Ascending aorta (tissue), 2 donors: ENCODE measurements at regions of chr7 and their contacts with region 1.

Region 1: DNA sequence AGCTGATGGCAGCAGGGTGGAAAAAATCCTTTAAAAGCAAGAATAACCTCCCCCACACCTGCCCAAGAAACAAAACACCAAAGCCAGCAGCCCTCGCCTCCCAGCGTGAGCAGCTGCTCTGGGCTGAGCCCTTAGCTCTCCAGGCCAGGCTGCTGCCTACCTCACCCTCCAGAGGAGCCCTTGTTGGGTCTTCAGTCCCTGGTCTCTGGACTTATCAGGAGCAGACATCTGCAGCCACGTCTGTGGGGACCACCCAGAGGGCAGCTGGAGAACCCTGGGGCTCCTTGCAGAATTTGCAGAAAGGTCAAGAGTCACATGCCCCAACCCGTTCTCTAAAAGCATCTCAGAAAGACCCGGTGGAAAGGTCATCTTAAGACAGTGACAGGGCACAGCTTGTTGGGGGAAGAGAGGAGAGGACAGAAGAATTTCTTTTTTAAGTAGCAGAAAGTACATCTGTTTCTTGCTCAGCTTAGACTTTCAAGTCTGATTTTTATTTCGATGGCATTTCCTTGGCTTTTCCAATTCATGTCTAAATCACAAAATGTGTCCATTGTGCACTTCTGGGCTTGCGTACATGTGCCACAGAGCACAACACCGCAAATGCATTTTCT is 425.7 kb upstream of the NFE2L3 start:
- DNase-seq: no peak
- H3K4me3 ChIP-seq: no peak overlapping the region
- H3K27ac ChIP-seq: no peak overlapping the region
- H3K4me1 ChIP-seq: peaks cover 5 to 9% of the 10 kb centered on the region in 2 donors
- H3K27me3 ChIP-seq: no peaks in the 10 kb centered on the region
- CTCF ChIP-seq: no peak

Region 2: GRCh38 chr7:25586513-25586912 is 139.8 kb before region 1 on chr7:
- intact Hi-C with region 1: no loop called
- DNase-seq: no peak
- H3K4me3 ChIP-seq: no peak overlapping the region
- H3K27ac ChIP-seq: no peak overlapping the region
- H3K4me1 ChIP-seq: no peaks in the 10 kb centered on the region
- H3K27me3 ChIP-seq: no peaks in the 10 kb centered on the region
- CTCF ChIP-seq: no peak

Region 3: DNA sequence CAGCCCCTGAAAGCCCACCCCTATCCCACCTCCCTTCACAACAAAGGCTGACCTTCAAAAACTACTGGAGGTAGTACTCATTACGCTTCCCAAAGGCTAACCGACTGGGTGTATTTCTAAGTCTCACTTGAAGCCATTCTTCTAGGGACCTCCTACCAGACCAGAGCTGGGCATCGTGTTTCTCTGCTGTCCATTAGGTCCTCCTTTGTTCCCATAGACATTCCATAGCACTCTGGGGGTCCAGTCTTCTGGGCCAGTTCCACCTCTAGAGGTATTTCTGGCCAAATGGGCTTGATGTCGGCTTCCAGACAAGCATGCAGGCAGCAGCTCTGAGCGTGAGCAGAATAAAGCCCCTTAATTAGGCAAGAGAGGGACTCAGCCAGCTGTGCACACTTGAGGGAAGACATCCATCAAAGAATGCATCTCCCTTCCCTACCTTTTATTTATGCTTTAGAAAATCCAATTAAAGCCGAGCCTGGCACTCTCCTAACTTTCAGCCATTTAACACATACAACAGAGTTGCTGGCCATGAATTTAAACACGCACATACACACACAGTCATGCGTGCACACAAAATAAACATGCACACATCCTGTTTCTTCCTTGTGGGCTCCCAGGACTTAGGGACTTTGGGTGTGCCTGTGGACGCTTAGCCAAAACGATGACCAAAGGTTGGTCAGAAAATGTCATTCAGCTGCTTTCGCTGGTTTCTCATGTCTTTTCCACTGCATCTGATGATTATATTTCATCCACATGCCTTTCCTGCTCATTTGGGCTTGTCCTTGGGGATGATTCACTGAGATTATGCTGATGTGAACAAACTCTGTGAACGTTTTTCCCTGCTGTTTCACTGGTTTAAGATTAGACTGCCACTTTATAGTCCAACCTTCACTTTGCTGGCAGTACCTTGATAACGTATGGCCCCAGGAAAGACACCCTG is 63.7 kb after region 1 on chr7:
- intact Hi-C with region 1: loop called (anchors 5 kb)
- DNase-seq: no peak
- H3K4me3 ChIP-seq: no peak overlapping the region
- H3K27ac ChIP-seq: peak overlapping the region in 1 of 2 donors; percentile 41
- H3K4me1 ChIP-seq: peaks cover 5 to 14% of the 10 kb centered on the region in 2 donors
- H3K27me3 ChIP-seq: no peaks in the 10 kb centered on the region
- CTCF ChIP-seq: no peak

Region 4: DNA sequence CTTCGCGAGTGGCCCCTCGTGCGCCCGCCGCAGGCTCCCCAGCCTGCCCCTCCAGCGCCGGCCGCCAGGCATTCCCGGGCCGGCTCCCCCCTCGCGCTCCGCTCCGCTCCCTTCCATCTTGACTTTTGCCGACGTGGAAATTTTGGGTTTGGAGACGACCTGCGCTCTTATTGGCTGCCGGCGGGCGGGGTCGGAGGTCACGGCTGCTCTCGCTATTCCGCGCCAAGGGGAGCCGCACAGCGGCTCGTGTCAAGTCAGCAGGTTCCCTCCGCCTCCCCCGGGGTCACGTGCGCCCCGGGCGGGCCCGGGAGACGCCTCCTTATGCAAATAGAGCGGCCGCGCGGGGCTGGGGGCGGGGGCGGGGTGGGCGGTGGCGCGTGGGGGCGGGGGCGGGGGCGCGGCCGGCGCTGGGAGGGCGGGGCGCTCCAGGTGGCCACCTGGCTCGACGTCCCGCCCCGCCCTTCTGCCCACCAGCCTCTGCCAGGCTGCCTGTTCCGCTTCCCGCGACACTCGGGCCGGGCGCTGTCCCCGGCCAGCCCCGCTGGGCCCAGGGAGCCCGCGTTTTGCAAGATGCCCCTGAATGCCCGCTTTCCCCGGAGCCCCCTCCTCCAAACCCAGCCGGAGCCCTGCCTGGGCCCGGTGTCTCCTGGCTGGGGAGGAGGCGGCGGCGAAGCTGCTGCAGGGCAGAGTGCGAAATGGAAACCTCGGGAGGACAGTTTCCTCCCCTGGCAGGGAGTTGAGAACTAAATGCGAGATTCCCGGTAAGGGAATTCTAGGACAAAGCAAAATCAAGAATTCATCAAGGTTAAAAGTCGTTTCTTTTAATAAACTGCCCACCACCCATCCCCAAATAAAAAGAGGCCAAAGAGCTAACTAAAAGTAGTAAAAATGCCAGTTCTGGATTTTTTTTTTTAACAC is 225.0 kb after region 1 on chr7:
- intact Hi-C with region 1: no loop called
- DNase-seq: peak; percentile 53 to 94
- H3K4me3 ChIP-seq: peak overlapping the region; percentile 76 to 89
- H3K27ac ChIP-seq: peak overlapping the region; percentile 0 to 56
- H3K4me1 ChIP-seq: peaks cover 7 to 10% of the 10 kb centered on the region in 2 donors
- H3K27me3 ChIP-seq: no peaks in the 10 kb centered on the region
- CTCF ChIP-seq: no peak